Brain microvascular endothelial cell (primary cell): ENCODE measurements at regions of chr10 and their contacts with region 1.

Region 1: GRCh38 chr10:62594093-62594520 is 210.4 kb upstream of the ADO start:
- DNase-seq: peak; percentile 47
- H3K4me3 ChIP-seq: no peak overlapping the region
- H3K27ac ChIP-seq: no peak overlapping the region
- H3K27me3 ChIP-seq: no peaks in the 10 kb centered on the region
- CTCF ChIP-seq: peak; percentile 97

Region 2: DNA sequence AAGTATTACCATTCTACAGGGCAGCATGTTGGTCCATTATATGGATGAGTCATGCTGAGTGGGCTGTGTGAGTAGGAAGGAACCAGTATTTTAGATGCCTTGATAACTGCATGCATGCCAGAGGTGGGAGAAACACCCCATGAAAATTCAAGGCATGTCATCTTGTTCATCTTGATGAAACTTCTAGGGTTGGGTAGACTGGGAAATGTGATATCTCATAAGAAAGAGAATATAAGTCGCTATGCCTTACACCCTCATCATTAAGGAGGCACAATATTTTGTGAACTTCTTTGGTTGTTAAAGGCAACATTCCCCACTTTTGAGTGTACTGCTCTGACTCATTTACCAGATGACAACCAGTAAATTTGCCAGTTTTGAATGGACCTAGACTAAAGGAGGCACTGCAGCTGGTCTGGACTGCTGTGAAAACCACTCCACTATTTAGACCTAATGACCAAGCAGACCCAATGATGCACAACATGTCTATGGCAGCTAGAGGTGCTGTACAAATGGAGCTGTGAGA is 172.0 kb before region 1 on chr10:
- in situ Hi-C with region 1: no loop called
- DNase-seq: peak; percentile 62
- H3K4me3 ChIP-seq: no peak overlapping the region
- H3K27ac ChIP-seq: no peak overlapping the region
- H3K27me3 ChIP-seq: no peaks in the 10 kb centered on the region
- CTCF ChIP-seq: peak; percentile 48

Region 3: DNA sequence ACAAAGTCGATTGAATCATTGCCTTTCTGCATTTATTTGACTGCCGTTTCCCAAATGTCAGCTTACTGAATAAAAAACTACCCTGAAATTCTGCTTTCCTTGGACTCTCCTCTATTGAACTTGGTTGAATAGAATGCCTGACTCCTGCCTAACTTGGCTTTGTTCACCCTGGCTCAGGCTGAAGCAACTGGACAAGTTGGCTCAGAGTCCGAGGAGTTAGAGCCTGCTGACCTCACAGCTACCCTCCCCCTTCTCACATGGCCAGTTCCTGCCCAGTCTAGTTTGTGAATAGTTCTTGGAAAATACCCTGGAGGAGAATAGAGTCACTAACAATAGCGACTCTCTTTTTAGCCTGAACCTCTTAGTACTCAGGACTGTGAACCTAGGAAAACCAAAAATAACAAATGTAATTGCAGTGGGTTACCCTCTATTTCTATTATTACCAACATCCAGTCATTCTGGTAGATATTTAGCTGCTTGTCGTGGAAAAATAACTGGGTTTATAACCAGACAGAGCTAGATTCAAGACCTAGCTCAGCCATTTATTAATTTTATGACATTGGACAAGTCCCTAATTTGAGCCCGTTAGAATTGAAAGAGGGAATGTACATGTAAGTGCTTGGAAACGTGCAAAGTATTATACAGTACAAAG is 521.8 kb after region 1 on chr10:
- in situ Hi-C with region 1: loop called (anchors 25 kb)
- DNase-seq: peak; percentile 49
- H3K4me3 ChIP-seq: no peak overlapping the region
- H3K27ac ChIP-seq: peak overlapping the region; percentile 17
- H3K27me3 ChIP-seq: no peaks in the 10 kb centered on the region
- CTCF ChIP-seq: no peak